A549 (cell line): ENCODE measurements at regions of chr1 and their contacts with region 1.

Region 1: DNA sequence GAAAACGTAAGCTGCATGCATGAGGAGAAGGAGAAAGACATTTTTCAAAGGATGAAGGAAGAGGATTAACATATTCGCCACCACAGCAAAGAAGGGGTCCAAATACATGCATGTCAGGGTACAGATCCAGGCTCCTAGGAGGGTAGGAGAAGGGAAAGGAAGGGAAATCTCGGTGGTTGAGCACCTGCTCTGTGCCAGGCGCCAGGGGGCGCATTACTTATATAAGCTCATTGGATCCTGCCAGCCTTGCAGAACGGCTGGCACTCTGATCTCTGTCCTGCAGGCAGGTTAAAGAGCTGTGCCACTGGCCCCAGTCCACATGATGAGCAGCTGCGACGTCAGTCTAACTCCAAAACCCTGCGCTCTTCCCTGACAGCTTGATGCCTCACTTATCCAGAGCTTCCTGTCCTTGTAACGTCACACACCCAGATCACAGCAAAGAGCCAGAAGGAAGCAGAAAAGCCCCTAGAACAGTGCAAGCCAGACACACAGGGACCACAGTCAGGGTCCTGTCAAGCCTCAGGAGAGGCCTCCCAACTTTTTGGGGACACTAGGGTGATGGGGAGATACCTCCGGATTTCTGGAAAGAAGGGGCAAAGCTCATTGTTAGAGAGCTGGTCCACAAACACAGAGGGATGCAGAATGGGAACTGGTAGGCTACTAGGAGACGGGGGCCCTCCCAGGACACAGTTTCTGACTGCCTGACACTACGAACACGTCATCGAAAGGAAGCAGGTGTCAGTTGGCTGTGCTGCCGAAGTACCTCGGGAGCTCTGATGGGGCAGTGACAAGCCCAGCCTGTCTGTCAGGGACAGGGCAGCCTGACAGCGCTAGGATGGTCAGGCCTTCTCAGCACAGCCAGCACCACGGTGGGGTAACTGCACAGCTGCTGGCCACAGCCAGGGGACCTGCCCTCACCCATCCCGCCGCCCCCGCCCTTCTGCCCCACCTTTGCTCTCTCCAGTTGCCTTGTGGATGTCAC is 99.1 kb downstream of the BEND5 start:
- DNase-seq: peak; percentile 24 to 58
- ATAC-seq: peak; percentile 88 to 96
- H3K4me3 ChIP-seq: no peak overlapping the region
- H3K27ac ChIP-seq: no peak overlapping the region
- H3K4me1 ChIP-seq: no peaks in the 10 kb centered on the region
- CTCF ChIP-seq: peak; percentile 61
- EP300 ChIP-seq: no peak
- POLR2A ChIP-seq: no peak
- RAD21 ChIP-seq: peak; percentile 41 to 49; a peak in 4 of 5 replicates

Region 2: GRCh38 chr1:48688102-48688760 is 10.6 kb after region 1 on chr1:
- CTCF ChIA-PET with region 1: interaction called, 12 read pairs
- POLR2A ChIA-PET with region 1: no interaction called
- DNase-seq: peak; percentile 10 to 15
- ATAC-seq: peak; percentile 82 to 94; a peak in 4 of 6 replicates
- H3K4me3 ChIP-seq: no peak overlapping the region
- H3K27ac ChIP-seq: no peak overlapping the region
- H3K4me1 ChIP-seq: no peaks in the 10 kb centered on the region
- CTCF ChIP-seq: no peak
- EP300 ChIP-seq: no peak
- POLR2A ChIP-seq: no peak
- RAD21 ChIP-seq: no peak

Region 3: GRCh38 chr1:48697066-48697707 is 19.6 kb after region 1 on chr1:
- CTCF ChIA-PET with region 1: interaction called, 13 read pairs
- POLR2A ChIA-PET with region 1: no interaction called
- DNase-seq: peak; percentile 10 to 12
- ATAC-seq: peak in 1 of 2 experiments; percentile 78; a peak in 3 of 6 replicates
- H3K4me3 ChIP-seq: no peak overlapping the region
- H3K27ac ChIP-seq: no peak overlapping the region
- H3K4me1 ChIP-seq: no peaks in the 10 kb centered on the region
- CTCF ChIP-seq: peak; percentile 54
- EP300 ChIP-seq: no peak
- POLR2A ChIP-seq: no peak
- RAD21 ChIP-seq: peak in 1 of 2 experiments; percentile 35; a peak in 2 of 5 replicates

Region 4: DNA sequence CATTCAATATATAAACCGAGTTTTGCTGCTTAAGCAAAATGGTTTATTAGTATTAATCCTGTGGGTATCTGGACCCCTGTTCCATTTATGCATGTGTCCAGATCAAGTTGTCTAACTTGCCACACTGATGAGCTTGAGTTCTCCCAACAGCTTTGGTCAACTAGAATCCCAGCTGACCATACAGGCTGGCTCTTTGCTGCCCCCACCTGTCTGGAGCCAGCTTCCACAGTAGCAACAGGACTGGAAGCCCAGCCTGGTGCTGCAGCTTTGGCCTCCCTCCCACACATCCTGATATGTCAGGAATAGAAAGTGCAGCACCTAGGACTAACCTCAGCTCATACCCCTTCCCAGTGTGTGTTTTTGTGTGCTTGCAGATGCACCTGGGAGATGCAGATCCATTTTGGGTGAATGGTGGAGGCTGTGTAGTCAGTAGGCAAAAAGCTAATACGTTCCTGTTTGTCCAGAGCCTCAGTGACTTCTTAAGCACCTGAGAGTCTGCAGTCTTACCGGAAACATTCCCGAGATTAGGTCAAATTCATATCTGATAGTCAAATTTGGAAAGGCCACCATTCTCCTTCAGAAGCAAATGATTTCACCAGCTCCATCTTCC is 140.0 kb after region 1 on chr1:
- CTCF ChIA-PET with region 1: interaction called, 15 read pairs
- POLR2A ChIA-PET with region 1: no interaction called
- DNase-seq: peak; percentile 8 to 44
- ATAC-seq: peak; percentile 66 to 90; a peak in 5 of 6 replicates
- H3K4me3 ChIP-seq: no peak overlapping the region
- H3K27ac ChIP-seq: no peak overlapping the region
- H3K4me1 ChIP-seq: no peaks in the 10 kb centered on the region
- CTCF ChIP-seq: peak; percentile 50
- EP300 ChIP-seq: no peak
- POLR2A ChIP-seq: no peak
- RAD21 ChIP-seq: peak; percentile 52 to 65; a peak in 4 of 5 replicates